ENCODE measurements at regions of chr6 and their contacts with region 1.

Region 1: GRCh38 chr6:147958683-147959082 is 384.0 kb upstream of the SASH1 start:
- DNase-seq: no peak
- H3K4me3 ChIP-seq: no peak overlapping the region
- H3K27ac ChIP-seq: no peak overlapping the region
- H3K4me1 ChIP-seq: no peaks in the 10 kb centered on the region
- CTCF ChIP-seq: no peak

Region 2: DNA sequence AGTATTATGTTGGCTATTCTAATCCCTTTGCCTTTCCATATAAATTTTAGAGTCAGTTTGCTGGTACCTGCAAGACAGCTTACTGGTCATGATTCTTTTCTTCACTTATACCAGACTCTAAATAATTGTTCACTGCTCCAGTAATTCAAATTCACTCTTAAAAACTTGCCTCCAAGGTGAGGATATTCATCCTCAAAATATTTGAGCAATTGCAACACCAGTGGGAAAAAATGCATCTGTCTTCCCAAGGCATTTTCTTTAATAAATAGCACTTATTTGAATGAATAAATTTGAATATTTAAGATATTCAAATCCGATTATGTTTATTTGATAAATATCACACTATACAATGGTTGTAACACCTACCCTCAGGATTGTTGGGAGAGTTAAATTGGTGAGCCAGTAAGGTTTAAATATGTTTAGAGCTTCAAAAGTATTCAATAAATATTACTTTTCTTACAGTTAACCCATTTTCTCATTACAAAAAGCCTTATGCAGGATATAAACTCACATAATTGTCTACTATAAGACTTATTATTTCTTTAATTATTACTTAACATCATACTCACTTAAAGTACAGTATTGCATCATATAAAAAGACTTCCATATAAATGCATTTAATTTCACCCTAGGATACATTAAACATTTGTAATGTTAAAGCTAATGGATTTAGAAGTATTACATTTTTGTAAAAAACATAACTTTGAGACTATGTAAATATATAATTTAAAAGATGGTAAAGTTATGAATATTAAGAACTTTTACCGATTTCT is 164.6 kb before region 1 on chr6:
- CTCF ChIA-PET with region 1: no interaction called
- POLR2A ChIA-PET with region 1: no interaction called
- intact Hi-C with region 1: no loop called
- DNase-seq: no peak
- H3K4me3 ChIP-seq: no peak overlapping the region
- H3K27ac ChIP-seq: no peak overlapping the region
- H3K4me1 ChIP-seq: no peaks in the 10 kb centered on the region
- CTCF ChIP-seq: no peak

Region 3: DNA sequence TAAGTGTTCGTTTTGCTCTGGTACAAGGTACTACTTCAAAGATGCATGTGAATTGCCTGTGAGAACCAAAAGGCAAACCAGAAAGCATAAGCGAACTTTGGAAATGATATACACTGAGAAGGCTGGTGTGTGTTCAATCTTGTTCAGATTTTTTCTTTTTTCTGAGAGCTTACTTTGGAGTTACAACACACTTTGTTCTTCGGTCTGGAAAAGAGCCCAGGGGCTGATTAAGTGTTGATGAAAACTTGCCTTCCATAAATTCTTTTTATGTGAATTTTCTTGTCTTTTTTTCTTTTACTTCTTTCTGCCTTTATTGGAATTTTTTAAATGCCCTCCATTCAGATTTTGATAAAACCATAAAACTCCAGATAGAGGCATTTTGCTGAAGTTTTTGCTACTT is 11.2 kb before region 1 on chr6:
- CTCF ChIA-PET with region 1: no interaction called
- POLR2A ChIA-PET with region 1: interaction called, 12 read pairs
- intact Hi-C with region 1: no loop called
- DNase-seq: no peak
- H3K4me3 ChIP-seq: no peak overlapping the region
- H3K27ac ChIP-seq: no peak overlapping the region
- H3K4me1 ChIP-seq: no peaks in the 10 kb centered on the region
- CTCF ChIP-seq: no peak

Region 4: GRCh38 chr6:148250975-148251685 is 292.4 kb after region 1 on chr6:
- CTCF ChIA-PET with region 1: no interaction called
- POLR2A ChIA-PET with region 1: no interaction called
- intact Hi-C with region 1: no loop called
- DNase-seq: peak; percentile 4
- H3K4me3 ChIP-seq: no peak overlapping the region
- H3K27ac ChIP-seq: no peak overlapping the region
- H3K4me1 ChIP-seq: no peaks in the 10 kb centered on the region
- CTCF ChIP-seq: peak; percentile 46; the same call in 1 of the 2 replicates